IMR-90 (cell line): ENCODE measurements at regions of chr2 and their contacts with region 1.

Region 1: GRCh38 chr2:40371525-40372282 is 80.2 kb downstream of the SLC8A1 start:
- DNase-seq: peak; percentile 90
- ATAC-seq: peak; percentile 85
- H3K4me3 ChIP-seq: no peak overlapping the region
- H3K27ac ChIP-seq: peak overlapping the region; percentile 70
- H3K4me1 ChIP-seq: peaks cover 19% of the 10 kb centered on the region
- H3K27me3 ChIP-seq: no peaks in the 10 kb centered on the region
- CTCF ChIP-seq: no peak
- POLR2A ChIP-seq: peak; percentile 5
- RAD21 ChIP-seq: no peak

Region 2: GRCh38 chr2:40281021-40281940 is 90.4 kb before region 1 on chr2:
- CTCF ChIA-PET with region 1: no interaction called
- POLR2A ChIA-PET with region 1: no interaction called
- dilution Hi-C with region 1: no loop called
- in situ Hi-C with region 1: no loop called
- intact Hi-C with region 1: loop called (anchors 5 kb)
- DNase-seq: peak; percentile 89
- ATAC-seq: peak; percentile 74
- H3K4me3 ChIP-seq: no peak overlapping the region
- H3K27ac ChIP-seq: peak overlapping the region; percentile 37
- H3K4me1 ChIP-seq: peaks cover 17% of the 10 kb centered on the region
- H3K27me3 ChIP-seq: no peaks in the 10 kb centered on the region
- CTCF ChIP-seq: no peak
- POLR2A ChIP-seq: no peak; the same call in 1 of the 2 replicates
- RAD21 ChIP-seq: no peak

Region 3: GRCh38 chr2:40401896-40402295 is 30.2 kb after region 1 on chr2:
- CTCF ChIA-PET with region 1: no interaction called
- POLR2A ChIA-PET with region 1: no interaction called
- dilution Hi-C with region 1: no loop called
- in situ Hi-C with region 1: no loop called
- intact Hi-C with region 1: no loop called
- DNase-seq: peak; percentile 94
- ATAC-seq: peak; percentile 78
- H3K4me3 ChIP-seq: no peak overlapping the region
- H3K27ac ChIP-seq: no peak overlapping the region
- H3K4me1 ChIP-seq: peaks cover 9% of the 10 kb centered on the region
- H3K27me3 ChIP-seq: no peaks in the 10 kb centered on the region
- CTCF ChIP-seq: no peak
- POLR2A ChIP-seq: no peak
- RAD21 ChIP-seq: no peak

Region 4: GRCh38 chr2:41180387-41180786 is 808.7 kb after region 1 on chr2:
- CTCF ChIA-PET with region 1: no interaction called
- POLR2A ChIA-PET with region 1: no interaction called
- dilution Hi-C with region 1: no loop called
- in situ Hi-C with region 1: no loop called
- intact Hi-C with region 1: no loop called
- DNase-seq: no peak
- ATAC-seq: no peak
- H3K4me3 ChIP-seq: no peak overlapping the region
- H3K27ac ChIP-seq: no peak overlapping the region
- H3K4me1 ChIP-seq: no peaks in the 10 kb centered on the region
- H3K27me3 ChIP-seq: no peaks in the 10 kb centered on the region
- CTCF ChIP-seq: no peak
- POLR2A ChIP-seq: no peak
- RAD21 ChIP-seq: no peak